IMR-90 (cell line): ENCODE measurements at regions of chr2 and their contacts with region 1.

Region 1: GRCh38 chr2:177651833-177652232 is 259.3 kb downstream of the AGPS start:
- DNase-seq: no peak
- ATAC-seq: no peak
- H3K4me3 ChIP-seq: no peak overlapping the region
- H3K27ac ChIP-seq: no peak overlapping the region
- H3K4me1 ChIP-seq: no peaks in the 10 kb centered on the region
- H3K27me3 ChIP-seq: peaks cover 3% of the 10 kb centered on the region; the same call in 1 of the 2 replicates
- CTCF ChIP-seq: no peak
- POLR2A ChIP-seq: no peak
- RAD21 ChIP-seq: no peak

Region 2: DNA sequence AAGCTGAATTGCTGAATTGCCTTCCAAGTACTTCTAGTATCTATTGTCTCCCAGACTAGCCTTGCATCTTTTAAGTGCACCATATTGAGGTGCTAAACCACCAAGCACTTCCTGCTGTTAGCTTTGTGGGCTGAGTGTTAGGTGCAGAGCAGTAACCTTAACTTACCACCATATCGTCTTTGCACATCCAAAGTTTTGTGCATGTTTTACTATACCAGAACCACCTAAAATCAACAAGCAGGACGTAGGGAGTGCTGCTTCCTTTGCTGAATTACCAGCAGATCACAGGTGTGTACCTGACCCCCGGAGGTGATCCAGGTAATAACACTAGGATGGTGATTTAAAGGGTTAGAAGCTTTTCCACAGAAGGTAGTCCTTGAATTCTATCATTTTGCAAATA is 799.2 kb before region 1 on chr2:
- CTCF ChIA-PET with region 1: no interaction called
- POLR2A ChIA-PET with region 1: no interaction called
- dilution Hi-C with region 1: no loop called
- in situ Hi-C with region 1: no loop called
- intact Hi-C with region 1: loop called (anchors 10 kb)
- DNase-seq: no peak
- ATAC-seq: no peak
- H3K4me3 ChIP-seq: no peak overlapping the region
- H3K27ac ChIP-seq: no peak overlapping the region
- H3K4me1 ChIP-seq: no peaks in the 10 kb centered on the region
- H3K27me3 ChIP-seq: no peaks in the 10 kb centered on the region
- CTCF ChIP-seq: no peak
- POLR2A ChIP-seq: no peak
- RAD21 ChIP-seq: no peak

Region 3: GRCh38 chr2:177676636-177677035 is 24.8 kb after region 1 on chr2:
- CTCF ChIA-PET with region 1: no interaction called
- POLR2A ChIA-PET with region 1: no interaction called
- dilution Hi-C with region 1: no loop called
- in situ Hi-C with region 1: no loop called
- intact Hi-C with region 1: no loop called
- DNase-seq: no peak
- ATAC-seq: no peak
- H3K4me3 ChIP-seq: no peak overlapping the region
- H3K27ac ChIP-seq: no peak overlapping the region
- H3K4me1 ChIP-seq: no peaks in the 10 kb centered on the region
- H3K27me3 ChIP-seq: no peaks in the 10 kb centered on the region
- CTCF ChIP-seq: no peak
- POLR2A ChIP-seq: no peak
- RAD21 ChIP-seq: no peak